Activated naive CD4-positive, alpha-beta T cell treated with anti-CD3 and anti-CD28 coated beads for 36 hours (primary cell): ENCODE measurements at regions of chr4 and their contacts with region 1.

Region 1: DNA sequence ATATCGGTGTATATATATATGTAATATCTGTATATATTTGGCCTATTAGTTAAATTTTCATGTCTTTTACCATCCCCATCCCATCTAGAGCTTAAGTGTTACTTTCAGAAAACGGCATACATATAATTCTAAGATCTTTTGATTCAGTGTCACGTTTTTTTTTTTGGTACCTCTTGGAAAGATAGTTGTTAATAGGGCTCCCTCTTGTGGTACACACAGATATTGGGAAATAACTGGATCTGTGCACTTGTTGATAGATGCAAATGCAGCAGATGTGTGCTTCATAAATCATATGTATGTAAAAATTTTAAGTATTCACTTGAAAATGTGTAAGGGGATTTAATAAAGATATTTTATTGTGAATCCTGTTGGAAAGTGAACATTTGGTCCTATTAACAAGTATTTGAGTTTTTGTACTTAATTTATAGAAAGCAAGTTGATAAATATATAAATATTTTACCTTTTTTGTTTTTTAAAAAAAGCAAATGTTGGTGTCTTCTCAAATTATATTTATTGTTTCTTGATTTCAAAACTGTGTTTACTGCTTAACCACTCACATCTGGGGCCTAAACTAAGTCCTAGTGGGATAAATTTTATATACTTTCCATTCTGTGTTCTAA is 74.7 kb downstream of the PAQR3 start:
- DNase-seq: peak; percentile 15
- H3K4me3 Mint-ChIP-seq: no peak overlapping the region
- H3K27ac Mint-ChIP-seq: no peak overlapping the region
- H3K4me1 Mint-ChIP-seq: peaks cover 6% of the 10 kb centered on the region
- H3K27me3 Mint-ChIP-seq: no peaks in the 10 kb centered on the region

Region 2: GRCh38 chr4:77959566-77960338 is 904.8 kb before region 1 on chr4:
- CTCF ChIA-PET with region 1: interaction called, 4 read pairs
- intact Hi-C with region 1: loop called (anchors 1 kb)
- DNase-seq: no peak
- H3K4me3 Mint-ChIP-seq: no peak overlapping the region
- H3K27ac Mint-ChIP-seq: no peak overlapping the region
- H3K4me1 Mint-ChIP-seq: peaks cover 16% of the 10 kb centered on the region
- H3K27me3 Mint-ChIP-seq: no peaks in the 10 kb centered on the region

Region 3: DNA sequence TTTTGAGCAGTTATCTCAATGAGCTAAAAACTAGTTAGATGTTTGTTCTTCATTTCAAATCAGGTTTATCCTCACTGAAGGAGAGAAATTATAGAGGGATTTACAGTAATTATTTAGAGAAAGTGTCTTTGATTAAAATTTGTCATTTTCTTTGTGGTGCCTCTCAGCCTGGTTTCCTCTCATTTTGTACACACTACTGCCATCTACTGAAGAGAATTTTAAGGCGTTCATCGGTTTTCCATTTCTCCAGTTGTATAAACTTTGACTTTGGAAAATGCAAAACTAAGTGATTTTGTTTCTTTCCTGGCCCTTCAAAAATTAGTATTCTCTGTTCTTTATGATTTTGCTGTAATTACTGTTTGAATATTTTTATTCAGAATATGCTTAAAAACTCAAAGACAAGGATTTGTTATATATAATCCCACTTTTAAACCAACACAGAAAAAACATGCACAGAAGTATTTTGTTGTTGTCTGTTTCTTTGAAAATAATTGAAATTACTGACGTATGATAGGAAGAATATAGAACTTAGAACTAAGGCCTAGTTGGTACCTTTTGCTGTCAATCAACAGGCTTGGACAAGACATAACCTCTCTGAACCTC is 347.4 kb before region 1 on chr4:
- CTCF ChIA-PET with region 1: no interaction called
- intact Hi-C with region 1: loop called (anchors 1 kb)
- DNase-seq: no peak
- H3K4me3 Mint-ChIP-seq: no peak overlapping the region
- H3K27ac Mint-ChIP-seq: no peak overlapping the region
- H3K4me1 Mint-ChIP-seq: no peaks in the 10 kb centered on the region
- H3K27me3 Mint-ChIP-seq: no peaks in the 10 kb centered on the region

Region 4: GRCh38 chr4:78612398-78613178 is 251.9 kb before region 1 on chr4:
- CTCF ChIA-PET with region 1: interaction called, 61 read pairs
- intact Hi-C with region 1: loop called (anchors 1 kb)
- DNase-seq: peak; percentile 42
- H3K4me3 Mint-ChIP-seq: no peak overlapping the region
- H3K27ac Mint-ChIP-seq: no peak overlapping the region
- H3K4me1 Mint-ChIP-seq: peaks cover 39% of the 10 kb centered on the region
- H3K27me3 Mint-ChIP-seq: no peaks in the 10 kb centered on the region

Region 5: DNA sequence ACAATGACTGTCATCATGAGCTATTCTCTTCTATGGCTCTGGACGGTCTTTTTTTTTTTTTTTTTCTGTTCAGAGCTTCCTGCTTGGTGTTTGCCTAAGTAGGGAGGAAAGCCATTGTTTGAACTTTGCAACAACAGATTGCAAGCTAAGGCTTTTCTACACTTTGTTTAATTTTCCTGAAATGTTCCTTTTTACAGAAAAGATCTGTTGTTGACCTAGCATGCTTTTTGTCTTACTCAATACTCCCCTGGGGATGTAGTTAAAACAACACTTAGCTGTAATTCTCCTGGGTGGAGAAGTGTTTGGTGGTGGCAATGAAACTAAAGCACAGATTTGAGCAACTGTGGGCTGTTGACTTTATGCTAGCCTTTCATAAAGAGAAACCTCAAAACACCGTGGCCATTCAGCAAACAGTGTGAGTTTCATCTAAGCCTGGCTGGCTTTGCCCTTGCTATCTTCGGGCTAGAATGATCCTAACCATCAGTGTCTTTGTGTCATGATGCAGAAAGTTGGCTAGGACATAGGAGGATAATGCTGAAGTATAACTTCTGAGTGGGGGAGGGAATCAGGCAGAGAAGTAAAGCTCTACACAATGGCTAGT is 202.5 kb before region 1 on chr4:
- CTCF ChIA-PET with region 1: interaction called, 10 read pairs
- intact Hi-C with region 1: no loop called
- DNase-seq: peak; percentile 40
- H3K4me3 Mint-ChIP-seq: no peak overlapping the region
- H3K27ac Mint-ChIP-seq: no peak overlapping the region
- H3K4me1 Mint-ChIP-seq: peaks cover 57% of the 10 kb centered on the region
- H3K27me3 Mint-ChIP-seq: no peaks in the 10 kb centered on the region

Region 6: GRCh38 chr4:78990938-78991810 is 126.7 kb after region 1 on chr4:
- CTCF ChIA-PET with region 1: no interaction called
- intact Hi-C with region 1: no loop called
- DNase-seq: no peak
- H3K4me3 Mint-ChIP-seq: no peak overlapping the region
- H3K27ac Mint-ChIP-seq: no peak overlapping the region
- H3K4me1 Mint-ChIP-seq: no peaks in the 10 kb centered on the region
- H3K27me3 Mint-ChIP-seq: peaks cover 9% of the 10 kb centered on the region

Region 7: GRCh38 chr4:79413032-79413885 is 548.7 kb after region 1 on chr4:
- CTCF ChIA-PET with region 1: no interaction called
- intact Hi-C with region 1: no loop called
- DNase-seq: no peak
- H3K4me3 Mint-ChIP-seq: no peak overlapping the region
- H3K27ac Mint-ChIP-seq: no peak overlapping the region
- H3K4me1 Mint-ChIP-seq: no peaks in the 10 kb centered on the region
- H3K27me3 Mint-ChIP-seq: no peaks in the 10 kb centered on the region

Region 8: DNA sequence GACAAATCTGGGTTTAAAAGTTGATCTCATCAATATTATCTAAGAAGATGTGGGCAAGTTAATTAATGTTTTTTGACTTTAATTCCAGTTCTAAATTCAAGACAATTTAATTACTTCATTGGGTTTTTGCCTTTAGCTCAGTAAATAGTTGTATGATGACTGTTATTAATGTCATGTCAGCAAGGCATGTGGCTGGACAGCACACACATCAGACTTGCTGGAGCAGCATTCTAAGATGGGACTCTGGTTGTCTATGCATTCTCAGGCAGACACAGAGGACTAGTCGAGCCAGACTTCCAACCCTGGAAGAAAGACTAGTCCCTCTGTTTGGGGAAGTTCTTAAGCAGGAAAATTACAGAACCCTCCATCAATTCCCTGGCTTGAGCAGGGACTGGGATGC is 724.2 kb after region 1 on chr4:
- CTCF ChIA-PET with region 1: no interaction called
- intact Hi-C with region 1: no loop called
- DNase-seq: no peak
- H3K4me3 Mint-ChIP-seq: no peak overlapping the region
- H3K27ac Mint-ChIP-seq: no peak overlapping the region
- H3K4me1 Mint-ChIP-seq: no peaks in the 10 kb centered on the region
- H3K27me3 Mint-ChIP-seq: peaks cover 4% of the 10 kb centered on the region